Activated CD4-positive, alpha-beta memory T cell treated with anti-CD3 and anti-CD28 coated beads, Interleukin-2, amount 10 ng/mL, durations not matched to agents 7 days and 5 days (primary cell): ENCODE measurements at regions of chr10 and their contacts with region 1.

Region 1: DNA sequence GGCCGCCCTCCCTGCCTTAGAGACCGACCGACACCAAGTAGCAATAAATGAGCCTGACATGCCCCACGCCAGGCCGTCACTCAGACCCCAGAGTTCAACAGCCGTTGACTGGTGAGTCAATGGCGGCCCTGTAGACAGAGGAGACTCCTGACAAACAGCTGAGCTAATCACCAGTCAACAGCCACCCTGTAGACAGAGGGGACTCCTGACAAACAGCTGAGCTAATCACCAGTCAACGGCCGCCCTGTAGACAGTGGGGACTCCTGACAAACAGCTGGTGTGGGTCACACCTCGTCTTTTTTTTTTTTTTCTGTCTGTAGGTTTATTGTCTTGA is 16.9 kb upstream of the KNDC1 start:
- DNase-seq: no peak
- H3K4me3 Mint-ChIP-seq: no peak overlapping the region
- H3K27ac Mint-ChIP-seq: no peak overlapping the region
- H3K4me1 Mint-ChIP-seq: peaks cover 8% of the 10 kb centered on the region
- H3K27me3 Mint-ChIP-seq: peaks cover 25% of the 10 kb centered on the region

Region 2: DNA sequence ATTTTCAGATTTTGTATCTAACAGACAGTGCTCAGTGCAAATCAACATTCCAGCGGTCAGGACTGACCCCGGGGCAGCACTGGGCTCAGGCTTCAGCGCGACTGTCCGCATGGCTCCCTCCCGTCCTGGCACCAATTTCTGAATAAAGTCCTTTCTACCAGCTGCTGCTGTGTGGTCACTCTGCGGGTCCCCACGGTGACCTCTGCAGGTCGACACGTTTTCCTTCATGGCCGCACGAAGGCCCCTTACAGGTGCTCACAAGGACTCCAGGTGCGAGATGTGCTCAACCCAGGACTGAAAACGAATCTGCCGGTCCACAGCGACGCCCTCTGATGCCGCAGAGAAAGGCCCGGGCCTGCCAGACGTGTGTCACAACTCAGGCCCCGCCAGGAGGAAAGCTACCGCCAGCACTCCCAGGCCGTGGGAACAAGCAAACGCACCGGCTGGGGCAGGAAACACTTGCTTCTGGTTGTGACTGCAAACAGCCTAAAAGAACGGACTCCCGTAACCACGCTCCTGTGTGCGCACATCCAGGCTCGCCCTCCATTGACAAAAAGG is 83.2 kb after region 1 on chr10:
- CTCF ChIA-PET with region 1: interaction called, 24 read pairs
- POLR2A ChIA-PET with region 1: no interaction called
- DNase-seq: peak; percentile 36
- H3K4me3 Mint-ChIP-seq: peak overlapping the region; percentile 73
- H3K27ac Mint-ChIP-seq: peak overlapping the region; percentile 78
- H3K4me1 Mint-ChIP-seq: peaks cover 32% of the 10 kb centered on the region
- H3K27me3 Mint-ChIP-seq: peaks cover 33% of the 10 kb centered on the region